Activated CD4-positive, alpha-beta T cell treated with anti-CD3 and anti-CD28 coated beads, Interleukin-2, amount 10 ng/mL, durations not matched to agents 24 days and 14 days (primary cell): ENCODE measurements at regions of chrX and their contacts with region 1.

Region 1: DNA sequence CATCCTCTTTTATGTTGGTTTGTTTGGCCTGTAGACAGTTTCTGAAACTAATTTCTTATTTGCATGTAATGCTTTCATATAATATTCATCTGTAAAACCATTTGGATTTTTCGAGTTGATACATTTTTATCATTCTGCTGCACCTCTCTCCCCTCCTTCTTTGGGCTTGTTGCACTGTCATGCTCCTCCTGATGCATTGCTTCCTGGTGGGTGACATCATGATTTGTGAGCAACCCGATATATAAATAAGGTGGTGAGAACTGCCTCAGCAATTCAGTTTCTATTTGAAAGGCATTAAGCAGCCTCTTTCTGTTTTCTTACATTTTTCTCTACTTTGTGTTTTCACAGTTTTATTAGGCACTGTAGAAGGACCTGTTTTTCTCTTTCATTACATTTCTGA is 515.7 kb downstream of the RPA4 start:
- DNase-seq: peak; percentile 60
- H3K4me3 Mint-ChIP-seq: peak overlapping the region; percentile 57
- H3K27ac Mint-ChIP-seq: peak overlapping the region; percentile 94
- H3K4me1 Mint-ChIP-seq: peaks cover 40% of the 10 kb centered on the region
- H3K27me3 Mint-ChIP-seq: no peaks in the 10 kb centered on the region

Region 2: GRCh38 chrX:97030463-97030862 is 368.9 kb before region 1 on chrX:
- intact Hi-C with region 1: loop called (anchors 2 kb)
- DNase-seq: no peak
- H3K4me3 Mint-ChIP-seq: no peak overlapping the region
- H3K27ac Mint-ChIP-seq: no peak overlapping the region
- H3K4me1 Mint-ChIP-seq: no peaks in the 10 kb centered on the region
- H3K27me3 Mint-ChIP-seq: no peaks in the 10 kb centered on the region

Region 3: DNA sequence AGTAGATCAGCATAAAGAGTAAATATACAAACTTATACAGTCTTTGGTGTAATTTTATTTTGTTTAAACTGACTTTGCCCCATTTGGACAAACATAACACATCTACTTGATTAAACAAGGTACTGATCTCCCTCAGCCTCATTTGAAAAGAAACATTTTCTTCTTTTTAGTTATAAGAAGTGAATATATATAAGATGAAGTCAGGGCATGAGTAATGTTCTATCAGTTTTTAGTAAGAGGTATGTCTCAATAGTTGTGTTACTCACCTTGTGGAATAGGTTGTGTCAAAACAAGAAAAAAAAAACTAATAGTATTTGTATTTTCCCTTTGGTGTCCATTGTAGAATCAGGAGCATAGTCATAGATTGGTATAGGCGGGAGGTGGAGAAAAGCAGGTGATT is 188.3 kb before region 1 on chrX:
- intact Hi-C with region 1: loop called (anchors 5 kb)
- DNase-seq: no peak
- H3K4me3 Mint-ChIP-seq: no peak overlapping the region
- H3K27ac Mint-ChIP-seq: no peak overlapping the region
- H3K4me1 Mint-ChIP-seq: no peaks in the 10 kb centered on the region
- H3K27me3 Mint-ChIP-seq: no peaks in the 10 kb centered on the region

Region 4: DNA sequence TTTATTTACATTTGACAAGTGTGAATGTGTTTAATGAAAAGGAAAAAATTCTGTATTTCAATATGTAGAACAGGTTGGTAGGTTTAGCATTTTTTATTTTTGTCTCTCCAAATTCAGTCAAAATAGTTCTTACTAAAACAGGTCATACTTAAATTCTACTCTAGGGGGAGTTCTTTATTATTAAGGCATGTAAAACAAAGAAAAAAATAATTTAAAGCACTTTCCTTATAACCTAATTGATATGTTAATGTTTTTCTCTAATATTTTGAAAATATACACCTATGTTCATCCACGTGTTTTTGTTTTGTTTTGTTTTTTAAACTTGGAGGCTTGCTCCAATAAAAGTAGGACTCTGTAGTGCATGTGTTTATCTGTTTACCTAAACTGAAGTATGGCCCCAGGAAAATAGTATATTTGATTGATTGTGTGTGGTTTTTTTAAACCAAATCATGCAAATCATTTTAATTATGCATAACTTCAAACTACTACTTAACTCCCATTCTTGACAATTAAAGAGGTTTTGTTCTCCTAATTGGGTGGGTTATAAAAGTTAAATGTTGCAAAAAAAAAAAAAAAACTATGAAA is 47.0 kb after region 1 on chrX:
- intact Hi-C with region 1: loop called (anchors 10 kb)
- DNase-seq: no peak
- H3K4me3 Mint-ChIP-seq: no peak overlapping the region
- H3K27ac Mint-ChIP-seq: no peak overlapping the region
- H3K4me1 Mint-ChIP-seq: no peaks in the 10 kb centered on the region
- H3K27me3 Mint-ChIP-seq: no peaks in the 10 kb centered on the region

Region 5: DNA sequence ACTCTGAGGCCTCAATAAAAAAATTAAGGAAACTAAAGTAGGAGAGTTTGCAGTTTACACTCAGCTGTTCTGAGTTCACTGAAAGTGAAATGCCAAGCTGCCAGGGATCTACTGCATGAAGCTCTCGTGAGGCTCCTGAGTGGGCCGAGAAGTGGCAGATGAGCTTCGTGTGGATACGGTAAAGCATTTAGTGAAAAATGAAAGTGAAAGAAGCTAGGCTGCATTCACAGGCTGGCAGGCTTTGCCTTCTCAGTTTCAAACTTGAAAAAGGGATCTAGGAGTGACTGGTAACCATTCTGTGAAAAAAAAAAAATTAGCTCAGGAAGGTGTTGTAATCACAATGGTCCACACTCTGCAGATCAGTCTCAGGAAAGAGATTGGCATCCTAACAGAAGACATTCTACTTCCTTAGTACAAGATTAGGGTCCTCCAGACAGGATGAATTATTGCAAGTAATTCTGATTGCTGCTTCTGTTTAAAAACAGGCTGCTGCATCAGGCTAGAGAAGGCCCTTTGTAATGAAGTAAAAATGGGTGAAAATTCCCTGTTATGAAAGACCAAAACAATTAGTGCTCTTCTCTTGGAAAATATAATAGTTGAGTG is 164.2 kb after region 1 on chrX:
- intact Hi-C with region 1: loop called (anchors 2 kb)
- DNase-seq: peak; percentile 80
- H3K4me3 Mint-ChIP-seq: peak overlapping the region; percentile 78
- H3K27ac Mint-ChIP-seq: peak overlapping the region; percentile 74
- H3K4me1 Mint-ChIP-seq: peaks cover 2% of the 10 kb centered on the region
- H3K27me3 Mint-ChIP-seq: no peaks in the 10 kb centered on the region

Region 6: DNA sequence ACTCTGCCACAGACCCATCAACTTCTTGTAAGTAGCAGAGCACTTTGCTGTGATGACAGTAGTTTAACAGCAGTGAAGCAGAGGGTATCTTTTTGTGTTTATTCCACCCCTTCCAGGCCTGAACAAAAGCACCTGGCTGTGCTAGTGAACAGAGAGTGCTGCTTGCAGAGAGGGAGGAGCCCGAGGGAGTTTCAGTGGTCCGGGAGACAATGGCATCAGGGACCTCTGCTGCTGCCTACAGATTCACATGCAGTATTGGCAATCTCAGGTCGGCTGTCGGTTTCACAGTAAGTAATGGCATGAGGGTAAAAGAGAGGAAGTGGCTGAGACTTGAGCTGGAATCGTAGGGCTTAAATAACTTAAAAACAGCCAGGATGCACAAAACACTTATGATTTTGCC is 240.1 kb after region 1 on chrX:
- intact Hi-C with region 1: no loop called
- DNase-seq: no peak
- H3K4me3 Mint-ChIP-seq: no peak overlapping the region
- H3K27ac Mint-ChIP-seq: no peak overlapping the region
- H3K4me1 Mint-ChIP-seq: peaks cover 5% of the 10 kb centered on the region
- H3K27me3 Mint-ChIP-seq: no peaks in the 10 kb centered on the region